ENCODE measurements at regions of chr1 and their contacts with region 1.

Region 1: DNA sequence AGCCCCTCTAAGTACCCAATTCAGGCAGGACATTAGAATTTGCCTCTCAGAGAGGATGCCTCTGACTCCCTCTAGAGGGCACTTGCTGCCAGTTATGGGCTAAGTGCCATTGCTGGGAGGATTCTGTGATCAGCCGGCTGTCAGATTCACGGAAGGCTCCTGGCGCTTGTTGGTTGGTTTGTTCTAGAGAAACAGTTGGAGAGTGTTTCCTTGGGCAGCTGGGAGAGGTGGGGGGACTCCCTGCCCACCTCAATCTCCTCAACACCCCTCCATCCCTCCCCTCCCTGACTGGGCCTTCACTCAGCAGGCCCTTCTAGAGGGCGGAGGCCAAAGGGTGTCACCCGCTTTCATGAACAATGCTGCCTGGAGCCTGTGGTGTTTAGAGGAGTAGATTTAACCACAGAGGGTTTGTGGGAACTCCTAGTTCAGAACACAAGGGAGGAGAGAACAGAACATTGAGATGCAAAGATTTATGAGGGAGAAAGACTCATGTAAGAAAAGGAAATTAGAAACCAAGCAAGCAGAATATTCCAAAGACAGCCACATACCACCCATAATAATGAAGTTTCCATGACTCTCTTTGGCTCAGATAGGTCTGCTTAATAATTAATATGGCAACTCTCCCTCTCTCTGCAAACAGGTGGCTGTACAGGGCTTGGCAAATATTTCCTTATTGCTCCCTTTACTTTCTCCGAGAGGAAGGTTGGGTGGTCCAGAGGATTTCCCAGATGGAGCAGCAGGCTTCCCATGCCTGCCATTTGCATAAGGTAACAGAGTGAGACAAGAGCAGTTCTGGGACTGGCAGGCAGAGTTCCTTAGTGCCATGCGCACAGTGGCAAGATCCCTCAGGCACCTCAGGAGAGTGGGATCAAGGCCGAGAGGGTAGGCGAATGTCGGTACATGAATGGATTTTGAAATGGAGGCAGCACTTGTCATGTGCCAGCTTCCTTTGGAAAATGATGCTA is 30.0 kb upstream of the ACP6 start:
- DNase-seq: peak; percentile 2 to 23 (median 10)
- H3K4me3 ChIP-seq: no peak overlapping the region
- H3K4me3 Mint-ChIP-seq: peak overlapping the region in 1 of 2 donors; percentile 12
- H3K27ac ChIP-seq: no peak overlapping the region
- H3K27ac Mint-ChIP-seq: no peak overlapping the region
- H3K4me1 ChIP-seq: no peaks in the 10 kb centered on the region
- H3K4me1 Mint-ChIP-seq: peaks cover 5% of the 10 kb centered on the region
- H3K27me3 ChIP-seq: peaks cover 0 to 2% of the 10 kb centered on the region in 2 donors
- H3K27me3 Mint-ChIP-seq: peaks cover 2 to 8% (median 4%) of the 10 kb centered on the region in 3 donors
- CTCF ChIP-seq: peak; percentile 78

Region 2: GRCh38 chr1:147434921-147435320 is 265.4 kb before region 1 on chr1:
- intact Hi-C with region 1: no loop called
- DNase-seq: no peak
- H3K4me3 ChIP-seq: no peak overlapping the region
- H3K4me3 Mint-ChIP-seq: no peak overlapping the region
- H3K27ac ChIP-seq: no peak overlapping the region
- H3K27ac Mint-ChIP-seq: no peak overlapping the region
- H3K4me1 ChIP-seq: no peaks in the 10 kb centered on the region
- H3K4me1 Mint-ChIP-seq: no peaks in the 10 kb centered on the region
- H3K27me3 ChIP-seq: no peaks in the 10 kb centered on the region
- H3K27me3 Mint-ChIP-seq: peaks cover 0 to 2% (median 0%) of the 10 kb centered on the region in 3 donors
- CTCF ChIP-seq: no peak

Region 3: GRCh38 chr1:147494998-147495580 is 205.2 kb before region 1 on chr1:
- intact Hi-C with region 1: loop called in 1 of 2 experiments (anchors 10 kb)
- DNase-seq: peak; percentile 8 to 28 (median 25)
- H3K4me3 ChIP-seq: no peak overlapping the region
- H3K4me3 Mint-ChIP-seq: no peak overlapping the region
- H3K27ac ChIP-seq: no peak overlapping the region
- H3K27ac Mint-ChIP-seq: no peak overlapping the region
- H3K4me1 ChIP-seq: no peaks in the 10 kb centered on the region
- H3K4me1 Mint-ChIP-seq: peaks cover 2% of the 10 kb centered on the region
- H3K27me3 ChIP-seq: no peaks in the 10 kb centered on the region
- H3K27me3 Mint-ChIP-seq: peaks cover 0 to 6% (median 5%) of the 10 kb centered on the region in 3 donors
- CTCF ChIP-seq: peak; percentile 66

Region 4: DNA sequence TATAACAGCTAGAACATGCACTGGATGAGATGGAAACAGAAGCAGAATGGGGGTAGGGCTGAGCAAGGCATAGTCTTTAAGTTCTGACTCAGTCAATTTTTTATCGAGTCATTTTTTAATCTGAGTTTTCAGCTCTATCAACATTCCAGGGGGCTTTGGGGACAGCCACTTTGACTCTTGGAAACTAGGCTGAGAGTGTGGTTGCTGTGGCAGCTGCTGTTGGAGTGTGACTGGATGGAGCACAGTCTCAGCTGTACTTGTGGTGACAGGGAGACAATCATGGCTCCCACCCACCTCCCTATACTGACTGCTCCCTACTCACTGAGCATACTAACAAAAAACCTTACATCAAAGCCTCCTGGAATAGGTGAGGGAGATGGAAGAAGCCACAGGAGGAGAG is 35.1 kb after region 1 on chr1:
- intact Hi-C with region 1: no loop called
- DNase-seq: no peak
- H3K4me3 ChIP-seq: no peak overlapping the region
- H3K4me3 Mint-ChIP-seq: no peak overlapping the region
- H3K27ac ChIP-seq: no peak overlapping the region
- H3K27ac Mint-ChIP-seq: no peak overlapping the region
- H3K4me1 ChIP-seq: no peaks in the 10 kb centered on the region
- H3K4me1 Mint-ChIP-seq: no peaks in the 10 kb centered on the region
- H3K27me3 ChIP-seq: no peaks in the 10 kb centered on the region
- H3K27me3 Mint-ChIP-seq: peaks cover 6 to 12% (median 7%) of the 10 kb centered on the region in 3 donors
- CTCF ChIP-seq: no peak

Measured in CD14-positive monocyte (primary cell).